ENCODE measurements at regions of chr20 and their contacts with region 1.

Region 1: DNA sequence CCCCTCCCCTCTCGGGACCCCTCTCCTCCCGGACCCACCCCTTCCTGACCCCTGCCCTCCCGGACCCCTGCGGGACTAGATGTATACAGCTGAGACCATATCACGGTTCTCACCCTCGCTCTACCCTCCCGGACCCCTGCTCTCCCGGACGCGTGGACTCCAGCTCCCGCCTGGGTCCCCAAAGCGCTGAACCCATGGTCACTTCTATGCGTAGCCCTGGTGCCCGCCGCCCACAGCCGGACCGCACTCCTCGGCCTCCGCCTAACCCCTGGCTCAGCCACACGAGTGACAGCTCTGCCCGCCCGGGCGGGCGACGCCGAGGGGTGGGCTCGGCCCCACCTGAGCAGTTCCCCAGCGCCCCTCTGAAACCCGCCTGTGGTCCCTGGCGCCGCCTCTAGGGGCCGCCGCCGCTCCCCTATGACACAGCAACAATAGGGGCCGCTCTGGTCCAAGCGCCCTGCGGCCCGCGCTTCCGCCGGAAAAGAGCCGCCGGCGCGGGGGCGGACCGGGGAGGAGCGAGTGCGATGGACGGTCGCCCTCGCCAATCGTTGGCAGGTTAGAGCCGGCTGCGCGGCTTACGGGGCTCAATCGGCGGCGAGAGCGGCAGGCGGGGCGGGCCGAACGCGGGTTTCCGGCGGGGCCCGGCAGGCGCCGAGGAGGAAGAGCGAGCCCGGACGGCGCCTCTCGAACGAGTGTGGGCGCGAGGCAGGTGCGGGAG is at the start of gene ADRM1:
- DNase-seq: peak; percentile 99 to 100
- H3K4me3 ChIP-seq: peak within 1 kb of the TSS; percentile 98
- H3K4me3 Mint-ChIP-seq: peak within 1 kb of the TSS; percentile 89
- H3K27ac Mint-ChIP-seq: peak within 1 kb of the TSS; percentile 97
- H3K4me1 ChIP-seq: peaks cover 20% of the 10 kb centered on the region
- H3K4me1 Mint-ChIP-seq: peaks cover 30% of the 10 kb centered on the region
- H3K27me3 ChIP-seq: no peaks in the 10 kb centered on the region
- H3K27me3 Mint-ChIP-seq: no peaks in the 10 kb centered on the region
- CTCF ChIP-seq: peak; percentile 100
- total RNA-seq, gene ADRM1: 261 and 263 TPM in 2 replicates

Region 2: GRCh38 chr20:62219992-62220665 is 82.4 kb before region 1 on chr20 and contains the start of gene HRH3:
- CTCF ChIA-PET with region 1: no interaction called
- POLR2A ChIA-PET with region 1: no interaction called
- intact Hi-C with region 1: no loop called
- DNase-seq: peak in 1 of 2 experiments; percentile 91
- H3K4me3 ChIP-seq: peak within 1 kb of the TSS; percentile 29
- H3K4me3 Mint-ChIP-seq: peak within 1 kb of the TSS; percentile 65
- H3K27ac Mint-ChIP-seq: no peak within 1 kb of the TSS
- H3K4me1 ChIP-seq: peaks cover 26% of the 10 kb centered on the region
- H3K4me1 Mint-ChIP-seq: no peaks in the 10 kb centered on the region
- H3K27me3 ChIP-seq: peaks cover 37% of the 10 kb centered on the region
- H3K27me3 Mint-ChIP-seq: peaks cover 57% of the 10 kb centered on the region
- CTCF ChIP-seq: no peak
- total RNA-seq, gene HRH3: not detected in 2 replicates

Region 3: GRCh38 chr20:62321521-62321948 is 19.0 kb after region 1 on chr20:
- CTCF ChIA-PET with region 1: interaction called, 6 read pairs
- POLR2A ChIA-PET with region 1: interaction called, 14 read pairs
- intact Hi-C with region 1: loop called (anchors 2 kb)
- DNase-seq: peak; percentile 77 to 88
- H3K4me3 ChIP-seq: no peak overlapping the region
- H3K4me3 Mint-ChIP-seq: no peak overlapping the region
- H3K27ac Mint-ChIP-seq: no peak overlapping the region
- H3K4me1 ChIP-seq: no peaks in the 10 kb centered on the region
- H3K4me1 Mint-ChIP-seq: no peaks in the 10 kb centered on the region
- H3K27me3 ChIP-seq: no peaks in the 10 kb centered on the region
- H3K27me3 Mint-ChIP-seq: no peaks in the 10 kb centered on the region
- CTCF ChIP-seq: no peak

Region 4: GRCh38 chr20:62362981-62363919 is 60.8 kb after region 1 on chr20:
- CTCF ChIA-PET with region 1: interaction called, 15 read pairs
- POLR2A ChIA-PET with region 1: interaction called, 6 read pairs
- intact Hi-C with region 1: loop called (anchors 1 kb)
- DNase-seq: peak in 1 of 2 experiments; percentile 55
- H3K4me3 ChIP-seq: no peak overlapping the region
- H3K4me3 Mint-ChIP-seq: peak overlapping the region; percentile 70
- H3K27ac Mint-ChIP-seq: peak overlapping the region; percentile 94
- H3K4me1 ChIP-seq: peaks cover 78% of the 10 kb centered on the region
- H3K4me1 Mint-ChIP-seq: peaks cover 46% of the 10 kb centered on the region
- H3K27me3 ChIP-seq: no peaks in the 10 kb centered on the region
- H3K27me3 Mint-ChIP-seq: no peaks in the 10 kb centered on the region
- CTCF ChIP-seq: no peak

Region 5: DNA sequence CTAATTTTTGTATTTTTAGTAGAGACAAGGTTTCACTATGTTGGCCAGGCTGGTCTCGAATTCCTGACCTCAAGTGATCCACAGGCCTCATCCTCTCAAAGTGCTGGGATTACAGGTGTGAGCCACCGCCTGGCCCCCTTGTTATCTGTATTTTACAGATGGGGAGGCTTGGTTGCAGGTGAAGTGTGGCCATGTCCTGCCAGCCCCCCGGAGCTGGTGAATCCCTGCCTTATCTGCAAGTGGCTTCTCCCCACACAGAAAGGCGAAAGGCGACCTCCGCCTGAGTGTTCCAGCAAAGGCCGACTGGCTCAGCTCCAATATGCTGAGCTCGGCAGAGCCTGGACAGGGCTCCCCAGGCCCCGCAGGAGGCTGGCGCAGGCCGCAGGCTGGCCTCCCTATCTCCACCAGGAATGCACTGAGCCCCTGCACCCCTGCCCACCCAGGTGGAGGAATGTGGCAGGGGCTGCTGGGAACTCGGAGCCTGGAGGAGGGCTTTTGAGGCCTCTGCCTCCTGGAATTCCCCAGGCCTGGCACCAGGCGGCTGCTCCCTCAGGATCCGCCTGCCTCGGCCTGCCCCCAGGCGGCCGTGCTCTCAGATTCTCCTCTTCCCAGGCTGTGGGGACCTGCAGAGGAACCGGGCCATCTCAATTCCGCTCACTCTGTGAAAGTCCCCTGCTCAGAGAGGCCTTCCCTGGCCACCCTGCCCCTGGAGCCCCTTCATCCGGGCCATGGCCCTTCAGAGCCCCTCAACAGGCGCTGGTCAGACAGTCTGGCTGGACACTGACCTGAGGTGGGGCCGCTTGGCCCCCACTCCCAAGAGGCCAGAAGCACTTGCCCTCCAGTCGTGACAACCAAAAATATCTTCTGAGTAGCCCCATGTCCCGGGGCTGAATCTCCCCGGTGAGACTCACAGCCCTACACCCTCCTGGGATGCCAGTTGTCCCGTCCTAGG is 73.9 kb after region 1 on chr20:
- CTCF ChIA-PET with region 1: interaction called, 21 read pairs
- POLR2A ChIA-PET with region 1: interaction called, 6 read pairs
- intact Hi-C with region 1: loop called (anchors 1 kb)
- DNase-seq: peak; percentile 85 to 90
- H3K4me3 ChIP-seq: no peak overlapping the region
- H3K4me3 Mint-ChIP-seq: no peak overlapping the region
- H3K27ac Mint-ChIP-seq: peak overlapping the region; percentile 49
- H3K4me1 ChIP-seq: peaks cover 50% of the 10 kb centered on the region
- H3K4me1 Mint-ChIP-seq: peaks cover 20% of the 10 kb centered on the region
- H3K27me3 ChIP-seq: no peaks in the 10 kb centered on the region
- H3K27me3 Mint-ChIP-seq: no peaks in the 10 kb centered on the region
- CTCF ChIP-seq: peak; percentile 51 to 70

Region 6: DNA sequence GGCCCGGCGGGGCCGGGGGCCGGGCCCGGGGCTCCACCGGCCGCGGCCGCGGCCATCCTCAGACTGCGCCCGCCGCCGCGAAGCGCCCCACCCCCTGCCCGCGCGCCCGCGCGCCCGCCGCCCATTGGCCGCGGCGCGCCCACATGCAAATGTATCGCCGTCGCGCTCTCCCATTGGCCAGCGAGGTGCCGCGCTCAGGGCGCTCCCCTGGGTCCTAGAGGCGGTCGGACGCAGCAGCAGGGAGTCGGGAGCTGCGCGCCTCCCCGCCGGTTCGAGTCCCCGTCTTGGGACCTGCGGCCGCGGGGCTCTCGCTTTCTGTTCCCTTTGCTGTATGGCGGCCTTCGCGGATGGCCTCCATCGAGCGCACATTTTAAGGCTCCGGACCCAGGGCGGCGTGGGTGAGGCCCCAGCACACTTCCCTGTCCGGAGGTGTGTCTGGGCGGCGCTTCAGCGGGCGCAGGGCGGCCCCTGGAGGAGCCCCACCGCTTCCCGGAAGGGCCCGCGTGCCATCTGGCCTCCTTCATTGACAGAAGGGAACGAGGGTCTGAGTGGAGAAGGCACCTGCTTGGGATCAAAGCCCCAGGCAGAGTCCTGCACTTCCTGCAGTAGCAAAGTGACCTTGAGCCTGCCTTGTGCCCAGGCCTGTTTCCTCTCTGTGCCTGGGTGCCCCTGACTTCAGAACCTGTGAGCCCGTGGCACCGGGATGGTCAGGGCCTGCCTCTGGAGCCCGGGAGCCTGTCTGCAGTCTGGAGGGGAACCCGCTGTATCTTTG is 104.9 kb after region 1 on chr20 and contains the start of gene CABLES2:
- CTCF ChIA-PET with region 1: interaction called, 6 read pairs
- POLR2A ChIA-PET with region 1: no interaction called
- intact Hi-C with region 1: loop called (anchors 1 kb)
- DNase-seq: peak; percentile 99 to 100
- H3K4me3 ChIP-seq: peak within 1 kb of the TSS; percentile 95
- H3K4me3 Mint-ChIP-seq: peak within 1 kb of the TSS; percentile 78
- H3K27ac Mint-ChIP-seq: peak within 1 kb of the TSS; percentile 83
- H3K4me1 ChIP-seq: peaks cover 58% of the 10 kb centered on the region
- H3K4me1 Mint-ChIP-seq: peaks cover 41% of the 10 kb centered on the region
- H3K27me3 ChIP-seq: no peaks in the 10 kb centered on the region
- H3K27me3 Mint-ChIP-seq: no peaks in the 10 kb centered on the region
- CTCF ChIP-seq: peak in 1 of 2 experiments; percentile 54
- total RNA-seq, gene CABLES2: 30.7 and 36.4 TPM in 2 replicates

Region 7: GRCh38 chr20:63641792-63642544 is 1339.5 kb after region 1 on chr20:
- CTCF ChIA-PET with region 1: no interaction called
- POLR2A ChIA-PET with region 1: no interaction called
- intact Hi-C with region 1: loop called (anchors 2 kb)
- DNase-seq: peak; percentile 100
- H3K4me3 ChIP-seq: peak overlapping the region; percentile 73
- H3K4me3 Mint-ChIP-seq: peak overlapping the region; percentile 79
- H3K27ac Mint-ChIP-seq: peak overlapping the region; percentile 67
- H3K4me1 ChIP-seq: peaks cover 21% of the 10 kb centered on the region
- H3K4me1 Mint-ChIP-seq: peaks cover 8% of the 10 kb centered on the region
- H3K27me3 ChIP-seq: no peaks in the 10 kb centered on the region
- H3K27me3 Mint-ChIP-seq: no peaks in the 10 kb centered on the region
- CTCF ChIP-seq: peak; percentile 72 to 92